PC-9 (cell line): ENCODE measurements at regions of chr17 and their contacts with region 1.

Region 1: DNA sequence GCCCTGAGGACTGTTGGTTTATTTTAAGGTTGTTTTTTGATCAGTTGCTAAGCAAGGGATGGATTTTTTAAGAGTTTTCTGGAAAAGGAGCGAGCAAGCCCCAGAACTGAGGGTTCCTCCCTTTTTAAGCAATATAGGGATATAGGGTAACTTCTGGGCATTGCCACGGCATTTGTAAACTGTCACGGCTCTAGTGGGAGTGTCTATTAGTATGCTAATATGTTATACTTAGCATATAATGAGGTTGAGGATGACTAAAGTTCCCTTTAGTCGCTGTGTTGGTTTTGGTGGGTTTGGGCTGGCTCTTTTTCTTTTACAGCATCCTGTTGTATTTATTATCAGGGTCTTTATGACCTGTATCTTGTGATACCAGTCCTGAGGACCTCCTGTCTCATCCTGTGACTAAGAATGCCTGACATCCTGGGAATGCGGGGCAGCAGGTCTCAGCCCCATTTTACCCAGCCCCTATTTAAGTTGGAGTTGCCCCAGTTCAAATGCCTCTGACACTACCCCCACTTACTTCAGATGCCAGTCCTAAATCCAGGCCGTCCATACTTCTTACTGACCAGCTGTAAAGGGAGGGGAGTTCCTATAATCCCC is 59.4 kb downstream of the MFSD11 start:
- DNase-seq: peak; percentile 40 to 57
- H3K4me3 ChIP-seq: no peak overlapping the region
- H3K27ac ChIP-seq: peak overlapping the region; percentile 16; the same call in 1 of the 2 replicates
- H3K4me1 ChIP-seq: peaks cover 13% of the 10 kb centered on the region
- H3K27me3 ChIP-seq: no peaks in the 10 kb centered on the region
- CTCF ChIP-seq: no peak

Region 2: GRCh38 chr17:76565728-76566612 is 231.4 kb before region 1 on chr17:
- CTCF ChIA-PET with region 1: interaction called, 18 read pairs
- POLR2A ChIA-PET with region 1: no interaction called
- intact Hi-C with region 1: no loop called
- DNase-seq: no peak
- H3K4me3 ChIP-seq: no peak overlapping the region
- H3K27ac ChIP-seq: no peak overlapping the region
- H3K4me1 ChIP-seq: no peaks in the 10 kb centered on the region
- H3K27me3 ChIP-seq: no peaks in the 10 kb centered on the region
- CTCF ChIP-seq: no peak

Region 3: GRCh38 chr17:76671123-76671911 is 126.0 kb before region 1 on chr17:
- CTCF ChIA-PET with region 1: no interaction called
- POLR2A ChIA-PET with region 1: no interaction called
- intact Hi-C with region 1: no loop called
- DNase-seq: peak; percentile 96 to 99
- H3K4me3 ChIP-seq: peak overlapping the region; percentile 69; the same call in 1 of the 2 replicates
- H3K27ac ChIP-seq: peak overlapping the region; percentile 61
- H3K4me1 ChIP-seq: peaks cover 9% of the 10 kb centered on the region
- H3K27me3 ChIP-seq: no peaks in the 10 kb centered on the region
- CTCF ChIP-seq: no peak